Activated B cell treated with CpG ODN at 0.5 μM for 24 hours (primary cell): ENCODE measurements at regions of chr5 and their contacts with region 1.

Region 1: DNA sequence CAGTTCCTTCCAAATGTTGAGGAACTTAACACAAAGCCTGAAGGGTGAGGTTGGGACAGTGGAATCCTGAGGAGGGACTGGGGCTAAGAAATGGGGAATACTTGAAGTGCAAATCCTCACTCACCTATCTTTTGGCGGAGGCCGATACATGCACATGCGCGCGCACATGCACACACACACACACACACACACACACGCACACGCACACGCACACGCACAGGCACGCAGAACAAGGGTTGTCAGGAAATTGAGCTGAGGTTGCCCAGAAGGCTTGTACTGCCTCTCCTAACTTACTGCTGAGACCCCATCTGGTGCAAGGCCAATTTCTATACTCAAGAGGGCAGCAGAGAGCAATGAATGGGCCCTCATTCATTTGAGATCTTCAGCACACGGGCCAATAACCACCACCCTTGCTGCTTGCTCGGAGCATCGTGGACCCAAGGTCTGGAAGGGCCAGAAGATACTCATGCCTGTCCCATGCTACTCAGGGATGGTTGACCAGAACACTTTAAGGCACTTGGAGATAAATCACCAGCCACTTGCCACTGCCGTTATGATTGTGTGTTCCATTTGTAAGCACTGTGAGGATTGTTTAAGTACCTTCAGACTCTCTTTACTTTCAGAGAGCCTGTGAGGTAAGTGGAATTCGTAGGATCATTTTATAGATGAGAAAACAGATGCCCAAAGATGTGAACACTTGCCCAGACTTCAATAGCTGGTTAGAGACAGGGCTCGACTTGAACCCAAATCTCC is 21.5 kb downstream of the BTF3 start:
- DNase-seq: peak; percentile 21
- ATAC-seq: peak; percentile 99
- H3K4me3 Mint-ChIP-seq: no peak overlapping the region
- H3K27ac Mint-ChIP-seq: no peak overlapping the region
- H3K4me1 Mint-ChIP-seq: peaks cover 4% of the 10 kb centered on the region
- H3K27me3 Mint-ChIP-seq: no peaks in the 10 kb centered on the region
- CTCF ChIP-seq: no peak

Region 2: GRCh38 chr5:73482383-73483136 is 37.1 kb before region 1 on chr5:
- CTCF ChIA-PET with region 1: no interaction called
- POLR2A ChIA-PET with region 1: no interaction called
- intact Hi-C with region 1: no loop called
- DNase-seq: no peak
- ATAC-seq: no peak
- H3K4me3 Mint-ChIP-seq: no peak overlapping the region
- H3K27ac Mint-ChIP-seq: no peak overlapping the region
- H3K4me1 Mint-ChIP-seq: no peaks in the 10 kb centered on the region
- H3K27me3 Mint-ChIP-seq: peaks cover 23% of the 10 kb centered on the region
- CTCF ChIP-seq: no peak

Region 3: DNA sequence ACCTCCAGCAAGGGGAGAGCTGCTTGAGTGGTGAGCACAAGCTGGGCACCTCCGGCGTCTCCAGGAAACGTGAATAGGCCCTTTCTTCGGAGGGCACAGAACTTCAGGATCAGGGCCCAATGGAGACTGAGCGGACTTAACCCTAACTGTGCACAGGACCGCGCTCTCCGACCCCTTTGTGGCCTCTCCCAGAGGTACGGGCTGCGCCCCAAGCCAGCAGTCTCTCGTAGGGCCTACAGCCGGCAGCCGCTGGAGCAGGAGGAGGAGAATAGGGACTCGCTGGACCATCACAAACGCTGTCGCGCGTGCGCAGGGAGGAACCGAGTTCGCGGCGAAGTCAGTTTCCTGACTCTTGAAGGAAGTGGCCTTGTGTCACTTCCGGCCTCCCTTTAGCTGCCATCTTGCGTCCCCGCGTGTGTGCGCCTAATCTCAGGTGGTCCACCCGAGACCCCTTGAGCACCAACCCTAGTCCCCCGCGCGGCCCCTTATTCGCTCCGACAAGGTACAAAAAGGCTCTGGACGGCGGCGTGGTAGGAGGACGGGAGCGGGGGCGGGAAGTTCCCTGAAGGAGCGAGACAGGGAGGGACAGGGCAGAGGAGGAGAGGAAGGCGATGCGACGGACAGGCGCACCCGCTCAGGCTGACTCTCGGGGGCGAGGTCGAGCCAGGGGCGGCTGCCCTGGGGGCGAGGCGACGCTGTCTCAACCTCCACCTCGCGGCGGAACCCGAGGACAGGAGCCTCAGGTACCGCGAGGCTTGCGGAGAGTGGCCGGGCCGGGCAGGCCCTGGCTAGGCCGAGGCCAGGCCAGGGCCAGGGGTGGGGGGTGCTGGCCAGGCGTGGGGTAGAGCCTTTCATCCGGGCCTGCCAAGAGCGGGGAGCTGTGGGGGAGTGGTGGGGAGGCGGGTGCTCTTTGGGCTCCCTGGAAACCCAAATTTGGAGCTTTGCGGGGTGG is 21.4 kb before region 1 on chr5 and contains the start of gene BTF3:
- CTCF ChIA-PET with region 1: interaction called, 3 read pairs
- POLR2A ChIA-PET with region 1: interaction called, 8 read pairs
- intact Hi-C with region 1: loop called (anchors 2 kb)
- DNase-seq: peak; percentile 88
- ATAC-seq: peak; percentile 96
- H3K4me3 Mint-ChIP-seq: peak within 1 kb of the TSS; percentile 97
- H3K27ac Mint-ChIP-seq: peak within 1 kb of the TSS; percentile 97
- H3K4me1 Mint-ChIP-seq: peaks cover 33% of the 10 kb centered on the region
- H3K27me3 Mint-ChIP-seq: peaks cover 4% of the 10 kb centered on the region
- CTCF ChIP-seq: no peak
- total RNA-seq, gene BTF3: 753 and 798 TPM in 2 replicates

Region 4: DNA sequence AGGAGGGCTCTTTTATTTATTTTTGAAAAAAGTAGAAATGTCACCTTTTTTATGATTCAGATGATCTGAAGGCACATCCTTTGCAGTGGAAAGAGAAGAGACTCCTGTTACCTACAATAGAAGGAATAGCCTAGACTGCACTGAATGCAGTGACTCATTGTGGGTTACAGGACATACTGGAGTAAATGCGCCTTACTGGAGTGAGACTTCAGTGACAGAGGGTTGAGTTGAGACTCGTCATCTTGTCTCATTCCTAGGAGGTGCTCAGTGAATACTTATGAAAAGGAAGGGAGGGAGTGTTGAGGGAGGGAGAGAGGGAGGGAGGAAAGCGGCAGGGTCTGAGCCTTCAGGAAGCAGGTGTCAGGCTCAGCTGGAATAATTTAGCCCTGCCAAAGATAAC is 20.5 kb after region 1 on chr5:
- CTCF ChIA-PET with region 1: interaction called, 38 read pairs
- POLR2A ChIA-PET with region 1: no interaction called
- intact Hi-C with region 1: loop called (anchors 1 kb)
- DNase-seq: no peak
- ATAC-seq: no peak
- H3K4me3 Mint-ChIP-seq: no peak overlapping the region
- H3K27ac Mint-ChIP-seq: no peak overlapping the region
- H3K4me1 Mint-ChIP-seq: no peaks in the 10 kb centered on the region
- H3K27me3 Mint-ChIP-seq: peaks cover 14% of the 10 kb centered on the region
- CTCF ChIP-seq: no peak

Region 5: DNA sequence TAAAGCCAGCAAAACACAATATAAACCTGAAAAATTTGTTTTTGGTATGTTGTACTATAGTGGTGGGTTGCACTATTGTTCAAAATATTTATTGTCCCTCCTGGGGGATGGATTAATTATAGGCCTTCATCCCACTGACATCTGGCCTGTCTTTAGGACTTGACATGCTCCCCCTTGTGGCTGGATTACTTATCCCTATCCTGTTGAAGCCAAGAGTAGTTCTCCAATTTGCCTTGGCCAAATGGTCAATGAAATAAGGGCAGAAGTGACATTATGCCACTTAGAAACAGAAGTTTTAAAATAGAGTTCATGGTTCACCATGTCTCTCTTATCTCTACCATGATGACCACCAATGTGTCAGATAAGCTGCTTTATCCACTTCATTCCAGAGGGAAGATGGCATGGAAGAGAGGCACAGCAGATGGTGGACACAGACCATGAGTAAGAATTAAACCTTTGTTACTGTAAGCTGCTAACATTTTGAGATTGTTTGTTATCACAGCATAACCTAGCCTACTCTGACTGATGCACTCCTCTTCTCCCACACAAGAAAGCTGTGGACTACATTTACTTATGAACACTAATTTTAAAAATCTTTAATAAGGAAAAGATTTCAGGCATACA is 77.1 kb after region 1 on chr5:
- CTCF ChIA-PET with region 1: no interaction called
- POLR2A ChIA-PET with region 1: no interaction called
- intact Hi-C with region 1: loop called (anchors 1 kb)
- DNase-seq: no peak
- ATAC-seq: no peak
- H3K4me3 Mint-ChIP-seq: no peak overlapping the region
- H3K27ac Mint-ChIP-seq: no peak overlapping the region
- H3K4me1 Mint-ChIP-seq: no peaks in the 10 kb centered on the region
- H3K27me3 Mint-ChIP-seq: peaks cover 13% of the 10 kb centered on the region
- CTCF ChIP-seq: no peak

Region 6: DNA sequence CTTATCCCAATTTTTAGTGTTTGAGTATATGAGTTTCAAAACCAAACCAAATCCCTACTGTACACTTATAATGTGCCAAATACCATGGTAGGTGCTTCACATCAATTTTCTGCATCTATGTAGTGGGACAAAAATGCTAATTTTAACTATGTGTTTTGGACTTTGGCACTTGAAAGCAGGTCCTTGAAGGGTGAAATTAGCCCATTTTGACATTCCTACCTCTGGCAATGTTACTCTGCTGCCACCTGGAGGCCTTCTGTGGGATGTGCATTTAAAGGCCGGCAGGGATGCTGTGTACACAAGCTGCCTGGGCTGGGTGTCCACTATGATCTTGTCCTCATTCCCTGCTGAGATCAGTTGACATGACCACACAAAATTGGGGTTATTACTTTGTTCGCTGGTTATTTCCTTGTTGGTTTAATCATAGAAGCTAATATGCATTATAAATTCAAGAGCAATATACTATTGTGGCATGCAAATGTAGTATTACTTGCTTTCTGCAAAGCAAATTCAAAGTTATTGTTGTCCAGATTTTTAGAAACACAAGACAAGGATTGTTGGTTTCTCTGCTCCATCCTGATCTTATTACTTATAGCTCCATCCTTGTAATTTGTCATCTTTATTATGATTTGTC is 273.1 kb after region 1 on chr5:
- CTCF ChIA-PET with region 1: no interaction called
- POLR2A ChIA-PET with region 1: no interaction called
- intact Hi-C with region 1: loop called (anchors 1 kb)
- DNase-seq: peak; percentile 24
- ATAC-seq: peak; percentile 64
- H3K4me3 Mint-ChIP-seq: no peak overlapping the region
- H3K27ac Mint-ChIP-seq: no peak overlapping the region
- H3K4me1 Mint-ChIP-seq: no peaks in the 10 kb centered on the region
- H3K27me3 Mint-ChIP-seq: peaks cover 18% of the 10 kb centered on the region
- CTCF ChIP-seq: peak; percentile 88